ENCODE measurements at regions of chr5 and their contacts with region 1.

Region 1: GRCh38 chr5:98905857-98906690 is 22.7 kb downstream of the CHD1 start:
- DNase-seq: no peak
- ATAC-seq: peak; percentile 43 to 63
- H3K4me3 ChIP-seq: no peak overlapping the region
- H3K27ac ChIP-seq: no peak overlapping the region
- H3K4me1 ChIP-seq: peaks cover 5% of the 10 kb centered on the region
- H3K27me3 ChIP-seq: no peaks in the 10 kb centered on the region
- CTCF ChIP-seq: peak; percentile 78

Region 2: DNA sequence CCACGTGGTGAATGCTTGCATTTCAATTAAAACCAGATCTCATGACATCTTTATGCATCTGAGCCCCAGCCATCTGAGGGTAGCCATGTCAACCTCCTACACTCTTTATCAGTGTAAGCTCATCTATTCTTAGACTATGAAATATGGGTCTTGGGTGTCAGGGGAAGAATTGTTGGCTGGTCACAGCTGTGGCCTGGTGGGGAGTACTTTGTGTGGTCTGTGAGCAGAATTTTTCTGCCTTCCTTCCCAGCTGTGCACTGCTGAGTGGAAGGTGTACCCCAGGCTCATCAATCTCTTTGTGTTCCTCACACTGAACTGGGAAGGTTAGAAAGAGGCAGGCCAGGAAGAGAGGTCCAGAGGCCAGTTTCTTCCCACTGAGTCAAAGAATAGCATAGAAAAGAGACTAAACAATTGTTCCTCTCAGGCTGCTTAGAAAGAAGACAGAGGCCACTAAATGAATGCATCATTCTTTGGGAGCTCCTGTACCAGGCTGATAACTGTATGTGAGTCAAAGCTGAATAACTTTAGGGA is 335.3 kb before region 1 on chr5:
- intact Hi-C with region 1: no loop called
- DNase-seq: no peak
- ATAC-seq: no peak
- H3K4me3 ChIP-seq: no peak overlapping the region
- H3K27ac ChIP-seq: no peak overlapping the region
- H3K4me1 ChIP-seq: no peaks in the 10 kb centered on the region
- H3K27me3 ChIP-seq: no peaks in the 10 kb centered on the region
- CTCF ChIP-seq: no peak

Region 3: GRCh38 chr5:99032234-99033013 is 126.3 kb after region 1 on chr5:
- intact Hi-C with region 1: loop called (anchors 5 kb)
- DNase-seq: no peak
- ATAC-seq: peak; percentile 81 to 90
- H3K4me3 ChIP-seq: peak overlapping the region; percentile 34
- H3K27ac ChIP-seq: peak overlapping the region; percentile 21
- H3K4me1 ChIP-seq: peaks cover 41% of the 10 kb centered on the region
- H3K27me3 ChIP-seq: no peaks in the 10 kb centered on the region
- CTCF ChIP-seq: peak; percentile 79

Measured in lower lobe of right lung (tissue), 2 donors.